Heart right ventricle (tissue), 16 donors: ENCODE measurements at regions of chr16 and their contacts with region 1.

Region 1: GRCh38 chr16:54422569-54422978 is 136.0 kb upstream of the IRX3 start:
- DNase-seq: no peak
- ATAC-seq: peak in 7 of 8 donors; percentile 32 to 69 (median 43)
- H3K4me3 ChIP-seq: no peak overlapping the region
- H3K27ac ChIP-seq: peak overlapping the region in 9 of 10 donors; percentile 52 to 84 (median 74)
- H3K4me1 ChIP-seq: peaks cover 0 to 33% (median 10%) of the 10 kb centered on the region in 9 donors
- H3K27me3 ChIP-seq: no peaks in the 10 kb centered on the region
- CTCF ChIP-seq: no peak

Region 2: DNA sequence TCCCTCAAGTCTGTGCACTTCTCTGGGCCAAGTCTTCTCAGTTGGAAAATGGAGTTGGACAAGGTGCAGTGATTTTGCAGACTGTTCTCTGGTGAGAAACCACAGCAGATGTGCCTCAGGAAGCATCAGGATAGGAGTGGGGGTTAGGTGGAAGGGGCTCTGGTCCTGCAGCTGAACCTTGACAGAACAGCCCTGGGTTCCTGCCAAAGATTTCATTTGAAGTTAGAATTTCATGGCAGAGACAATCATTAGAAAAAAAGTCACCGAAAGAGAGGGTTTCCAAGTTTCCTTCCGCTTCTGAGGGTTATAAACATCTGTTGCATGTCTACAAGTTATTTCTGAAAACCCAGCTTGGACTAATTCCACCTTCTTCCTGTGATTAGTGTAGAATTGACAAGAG is 55.6 kb before region 1 on chr16:
- intact Hi-C with region 1: loop called in 1 of 10 experiments (anchors 10 kb)
- DNase-seq: no peak
- ATAC-seq: no peak
- H3K4me3 ChIP-seq: no peak overlapping the region
- H3K27ac ChIP-seq: no peak overlapping the region
- H3K4me1 ChIP-seq: peaks cover 0 to 8% (median 5%) of the 10 kb centered on the region in 9 donors
- H3K27me3 ChIP-seq: peaks cover 0 to 24% (median 0%) of the 10 kb centered on the region in 7 donors
- CTCF ChIP-seq: no peak

Region 3: GRCh38 chr16:54455030-54455725 is 32.6 kb after region 1 on chr16:
- intact Hi-C with region 1: no loop called
- DNase-seq: no peak
- ATAC-seq: no peak
- H3K4me3 ChIP-seq: no peak overlapping the region
- H3K27ac ChIP-seq: peak overlapping the region in 1 of 10 donors; percentile 28
- H3K4me1 ChIP-seq: peaks cover 0 to 7% (median 0%) of the 10 kb centered on the region in 9 donors
- H3K27me3 ChIP-seq: no peaks in the 10 kb centered on the region
- CTCF ChIP-seq: no peak

Region 4: DNA sequence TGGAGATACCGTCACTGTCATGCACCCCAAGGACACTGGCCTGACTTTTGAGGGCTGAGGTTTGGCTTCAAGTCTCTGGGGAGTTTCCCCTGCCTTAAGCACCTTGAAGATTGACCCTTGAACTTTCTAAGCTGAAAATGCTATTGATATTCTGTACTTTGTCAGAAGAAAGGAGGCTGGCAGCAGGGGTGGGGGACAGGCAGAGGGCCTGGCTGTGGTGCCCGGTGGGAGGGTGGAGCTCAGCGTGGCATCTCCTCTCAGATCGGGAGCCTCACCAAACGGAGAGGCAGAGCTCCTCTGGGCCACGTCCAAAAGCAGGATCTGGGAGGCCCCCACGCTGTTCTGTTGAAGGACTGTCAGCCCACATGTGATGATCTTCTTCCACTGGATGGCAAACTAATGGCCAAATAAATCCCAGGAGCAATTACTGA is 169.3 kb after region 1 on chr16:
- intact Hi-C with region 1: no loop called
- DNase-seq: no peak
- ATAC-seq: no peak
- H3K4me3 ChIP-seq: no peak overlapping the region
- H3K27ac ChIP-seq: no peak overlapping the region
- H3K4me1 ChIP-seq: peaks cover 0 to 12% (median 0%) of the 10 kb centered on the region in 9 donors
- H3K27me3 ChIP-seq: peaks cover 0 to 13% (median 6%) of the 10 kb centered on the region in 7 donors
- CTCF ChIP-seq: no peak